ENCODE measurements at regions of chr2 and their contacts with region 1.

Region 1: DNA sequence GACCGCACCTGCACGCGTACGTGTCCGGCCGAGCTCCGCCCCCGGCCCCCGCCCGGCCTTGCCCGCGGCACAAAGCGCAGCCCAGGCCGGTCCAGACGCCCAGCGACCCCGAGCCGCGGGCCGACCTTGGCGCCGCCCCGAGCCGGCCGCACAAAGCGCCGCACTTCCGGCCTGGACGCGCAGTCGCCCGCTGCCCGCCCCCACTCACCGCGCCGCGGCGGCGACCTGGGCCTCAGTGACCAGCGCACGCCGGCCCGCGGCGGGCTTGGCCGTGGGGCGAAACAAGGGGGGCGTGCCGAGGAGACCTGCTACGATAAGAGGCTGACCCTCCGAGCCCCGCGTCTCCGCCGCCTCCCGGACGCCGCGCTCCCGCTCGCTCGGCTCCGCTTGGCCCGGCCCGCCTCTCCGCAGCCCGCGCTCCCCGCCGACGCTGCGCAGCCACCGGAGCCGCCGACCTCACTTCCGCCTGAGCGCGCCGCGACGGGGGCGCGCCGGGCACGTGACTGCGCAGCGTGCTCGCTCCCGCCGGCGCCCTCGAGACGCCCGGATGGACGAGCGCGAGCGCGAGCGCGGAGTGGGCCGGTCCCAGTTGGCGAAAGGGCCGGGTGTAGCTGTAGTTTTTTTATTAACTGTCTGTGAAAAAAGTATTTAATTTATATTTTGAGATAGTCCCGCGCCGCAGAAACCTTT is at the start of gene FAM168B:
- H3K4me3 ChIP-seq: peak within 1 kb of the TSS; percentile 79
- H3K27ac ChIP-seq: peak within 1 kb of the TSS; percentile 97
- H3K4me1 ChIP-seq: no peaks in the 10 kb centered on the region
- CTCF ChIP-seq: no peak

Region 2: DNA sequence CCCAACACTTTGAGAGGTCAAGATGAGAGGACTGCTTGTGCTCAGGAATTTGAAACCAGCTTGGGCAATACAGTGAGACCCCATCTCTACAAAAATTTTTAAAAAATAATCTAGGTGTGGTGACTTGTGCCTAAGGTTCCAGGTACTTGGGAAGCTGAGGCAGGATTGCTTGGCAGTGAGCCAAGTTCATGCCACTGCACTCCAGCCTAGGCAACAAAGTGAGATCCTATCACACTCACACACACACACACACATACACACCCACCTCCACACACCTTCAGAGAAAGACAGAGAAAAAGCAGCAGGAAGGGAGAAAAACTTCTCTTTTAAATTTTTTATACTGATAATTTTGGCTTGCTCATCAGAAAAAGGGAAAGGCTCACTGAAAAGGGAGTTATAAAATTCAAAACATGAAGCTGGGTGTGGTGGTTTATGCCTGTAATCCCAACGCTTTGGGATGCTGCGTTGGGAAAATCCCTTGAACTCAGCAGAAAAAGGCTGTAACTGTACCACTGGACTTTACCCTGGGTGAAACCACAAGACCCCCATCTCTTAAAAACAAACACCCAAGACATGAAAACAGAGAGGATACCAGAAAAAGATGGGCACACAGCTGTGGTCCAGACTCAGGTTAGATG is 25.5 kb before region 1 on chr2:
- CTCF ChIA-PET with region 1: no interaction called
- POLR2A ChIA-PET with region 1: no interaction called
- H3K4me3 ChIP-seq: no peak overlapping the region
- H3K27ac ChIP-seq: no peak overlapping the region
- H3K4me1 ChIP-seq: peaks cover 12% of the 10 kb centered on the region
- CTCF ChIP-seq: no peak

Region 3: DNA sequence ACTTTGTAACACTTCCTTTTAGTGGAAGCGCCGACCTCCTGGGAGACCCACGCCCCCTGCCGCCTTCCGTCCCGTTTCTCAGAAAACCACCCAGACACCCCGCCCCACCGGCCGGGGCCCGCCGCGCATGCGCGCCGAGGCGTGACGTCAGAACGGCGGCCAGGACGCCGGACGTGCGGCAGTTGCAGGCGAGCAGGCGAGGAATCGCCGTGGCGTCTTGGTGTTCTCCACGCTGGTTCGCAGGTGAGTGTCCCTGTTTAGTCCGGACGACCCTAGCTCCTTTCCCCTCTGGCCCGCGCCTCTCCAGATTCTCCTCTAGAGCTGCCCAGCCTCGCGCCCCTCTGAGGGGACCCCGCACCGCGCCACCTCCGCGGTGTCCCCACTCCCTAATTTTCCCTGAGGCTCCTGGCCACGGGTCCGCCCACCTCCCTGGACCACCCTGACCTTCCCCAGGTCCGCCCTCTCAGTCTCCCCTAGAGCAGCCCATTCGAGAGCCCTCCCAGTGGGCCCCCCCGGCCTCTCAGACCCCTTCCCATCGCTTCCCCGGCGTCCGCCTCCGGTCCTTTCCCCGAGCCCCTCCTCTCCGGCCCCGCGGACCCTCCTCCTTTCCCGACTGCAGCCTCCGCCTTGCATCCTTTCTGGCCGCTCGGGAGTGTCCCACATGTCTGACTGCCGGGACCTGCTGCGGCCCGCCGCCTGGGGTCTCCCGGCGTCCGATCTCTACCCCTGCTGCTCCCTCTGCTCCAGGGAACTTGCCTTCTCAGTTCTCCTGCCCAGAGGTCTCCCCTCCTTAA is 12.2 kb after region 1 on chr2 and contains the start of gene PLEKHB2:
- CTCF ChIA-PET with region 1: interaction called, 4 read pairs
- POLR2A ChIA-PET with region 1: interaction called, 16 read pairs
- H3K4me3 ChIP-seq: peak within 1 kb of the TSS; percentile 63
- H3K27ac ChIP-seq: peak within 1 kb of the TSS; percentile 74
- H3K4me1 ChIP-seq: peaks cover 6% of the 10 kb centered on the region; the same call in 1 of the 2 replicates
- CTCF ChIP-seq: peak; percentile 31

Region 4: GRCh38 chr2:131153529-131153928 is 60.4 kb after region 1 on chr2:
- CTCF ChIA-PET with region 1: no interaction called
- POLR2A ChIA-PET with region 1: no interaction called
- H3K4me3 ChIP-seq: no peak overlapping the region
- H3K27ac ChIP-seq: no peak overlapping the region
- H3K4me1 ChIP-seq: no peaks in the 10 kb centered on the region
- CTCF ChIP-seq: no peak

Measured in HEK293 (cell line).